ENCODE measurements at regions of chr7 and their contacts with region 1.

Region 1: GRCh38 chr7:19069842-19070241 is 47.6 kb downstream of the TWIST1 start:
- DNase-seq: no peak

Region 2: DNA sequence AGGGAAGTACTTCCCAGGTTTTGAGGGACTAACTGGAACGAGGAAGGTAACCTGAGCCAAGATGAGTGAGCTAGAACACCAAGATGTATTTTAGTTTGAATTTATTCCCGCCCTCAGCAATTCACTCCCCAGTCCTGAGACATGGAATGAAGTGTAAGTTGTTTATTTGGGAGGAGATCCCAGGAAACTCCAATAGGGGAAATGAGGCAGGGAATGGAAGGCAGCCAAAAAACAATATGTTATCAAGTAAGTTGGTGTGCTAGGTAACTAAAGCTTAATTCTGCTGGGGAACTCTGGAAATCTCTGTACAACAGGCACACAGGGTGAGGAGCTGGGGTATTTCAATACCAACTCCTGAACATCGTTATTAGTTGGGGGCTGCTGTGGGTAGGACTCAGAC is 764.0 kb before region 1 on chr7:
- intact Hi-C with region 1: loop called in 1 of 2 experiments (anchors 5 kb)
- DNase-seq: no peak

Region 3: GRCh38 chr7:19080093-19080492 is 10.3 kb after region 1 on chr7:
- intact Hi-C with region 1: no loop called
- DNase-seq: no peak

Measured in posterior vena cava (tissue), 2 donors.